HEK293T (cell line): ENCODE measurements at regions of chr16 and their contacts with region 1.

Region 1: DNA sequence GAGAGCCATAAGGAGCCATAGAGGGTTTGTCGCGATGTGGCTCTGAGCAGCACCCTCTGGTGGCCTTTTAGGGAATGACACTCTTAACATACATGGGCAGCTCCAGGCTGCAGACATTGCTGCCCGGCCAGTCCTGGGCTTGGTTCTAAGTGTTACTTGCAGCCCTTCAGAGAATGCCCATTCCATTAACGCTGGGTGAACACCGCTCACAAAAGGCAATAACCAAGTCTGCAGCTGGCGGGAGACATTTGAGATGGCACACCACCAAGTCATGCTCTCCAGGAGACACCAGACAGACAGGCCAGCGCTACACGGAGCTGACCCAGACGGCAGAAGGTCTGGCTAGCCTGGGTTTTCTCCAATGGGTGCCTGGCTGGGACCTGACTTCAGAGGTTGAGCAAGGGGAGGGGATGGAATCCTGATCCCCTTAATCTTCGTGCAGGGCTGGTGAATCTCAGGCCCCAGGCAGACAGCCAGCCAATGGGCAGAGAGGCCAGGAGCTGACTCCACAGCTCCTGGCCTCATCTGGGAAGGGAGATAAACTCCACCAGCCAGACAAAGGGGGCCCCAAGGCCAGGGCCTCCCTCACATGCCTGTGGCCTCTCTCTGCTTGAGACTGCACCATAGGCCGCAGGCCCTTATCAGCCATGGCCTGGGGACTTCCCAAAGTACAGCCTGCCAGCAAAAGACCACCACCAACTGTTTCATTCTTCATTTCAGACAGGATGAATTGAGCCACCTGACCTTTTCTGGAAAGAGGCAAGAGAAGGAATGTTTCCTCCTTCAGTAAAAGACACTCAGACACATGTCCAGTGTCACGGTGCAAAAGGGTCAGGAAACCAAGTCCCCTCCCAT is 58.8 kb downstream of the ZDHHC7 start:
- DNase-seq: peak; percentile 87

Region 2: GRCh38 chr16:84754353-84754856 is 198.2 kb before region 1 on chr16:
- CTCF ChIA-PET with region 1: interaction called, 32 read pairs
- POLR2A ChIA-PET with region 1: no interaction called
- DNase-seq: peak; percentile 76

Region 3: GRCh38 chr16:84925092-84925772 is 27.3 kb before region 1 on chr16:
- CTCF ChIA-PET with region 1: interaction called, 20 read pairs
- POLR2A ChIA-PET with region 1: no interaction called
- DNase-seq: peak; percentile 77

Region 4: GRCh38 chr16:84963066-84963465 is 10.5 kb after region 1 on chr16:
- CTCF ChIA-PET with region 1: interaction called, 11 read pairs
- POLR2A ChIA-PET with region 1: no interaction called
- DNase-seq: no peak

Region 5: DNA sequence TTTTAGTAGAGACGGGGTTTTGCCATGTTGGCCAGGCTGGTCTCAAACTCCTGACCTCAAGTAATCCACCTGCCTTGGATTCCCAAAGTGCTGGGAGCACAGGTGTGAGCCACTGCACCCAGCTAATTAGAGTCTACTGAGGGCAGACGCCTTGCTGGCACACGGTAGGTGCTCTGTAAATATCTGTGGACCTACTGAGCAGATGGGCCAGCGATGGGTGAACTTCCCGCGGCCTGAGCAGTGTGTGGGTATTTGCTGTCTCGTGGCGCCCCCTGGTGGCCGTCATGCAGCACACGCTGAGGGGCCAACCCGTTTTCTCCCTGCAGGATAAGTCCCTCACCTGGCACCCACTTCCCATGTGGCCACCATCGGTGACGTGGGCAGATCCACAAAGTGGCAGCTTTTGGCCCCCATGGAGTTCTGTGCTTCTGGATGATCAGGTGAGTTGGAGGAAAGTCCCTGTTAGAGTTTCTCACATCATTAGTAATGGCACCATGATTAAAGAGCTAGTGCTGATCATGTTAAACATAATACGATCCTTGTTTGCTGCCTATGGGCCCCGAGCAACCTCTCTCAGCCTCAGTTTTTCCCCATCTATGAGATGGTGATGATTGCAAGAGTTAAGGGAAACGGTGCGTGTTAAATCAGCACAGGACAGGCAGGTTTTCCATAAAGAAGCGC is 18.0 kb after region 1 on chr16:
- CTCF ChIA-PET with region 1: interaction called, 11 read pairs
- POLR2A ChIA-PET with region 1: interaction called, 3 read pairs
- DNase-seq: peak; percentile 85

Region 6: DNA sequence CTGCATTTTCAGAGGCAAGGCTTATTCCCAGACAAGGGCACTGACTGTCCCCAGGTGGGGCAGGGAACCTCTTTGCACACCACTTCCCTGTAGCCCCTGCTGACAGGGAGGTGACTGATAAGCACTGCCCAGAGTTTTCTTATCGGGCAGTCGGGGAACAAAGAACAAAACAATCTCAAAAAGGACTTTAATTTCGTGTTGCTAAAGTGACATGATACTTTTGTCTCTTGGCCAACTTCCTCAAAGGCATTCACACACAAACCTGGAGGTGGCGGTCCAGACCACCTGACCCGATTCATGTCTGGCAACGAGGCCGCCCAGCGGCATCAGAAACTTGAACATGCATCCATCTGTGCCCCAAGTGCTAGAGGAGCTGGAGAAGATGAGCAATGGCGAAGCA is 29.9 kb after region 1 on chr16:
- CTCF ChIA-PET with region 1: no interaction called
- POLR2A ChIA-PET with region 1: no interaction called
- DNase-seq: no peak

Region 7: GRCh38 chr16:84995663-84996062 is 43.1 kb after region 1 on chr16:
- CTCF ChIA-PET with region 1: no interaction called
- POLR2A ChIA-PET with region 1: no interaction called
- DNase-seq: no peak